ENCODE measurements at regions of chr11 and their contacts with region 1.

Region 1: GRCh38 chr11:10933455-10934292 is 75.8 kb upstream of the ZBED5 start:
- DNase-seq: peak; percentile 90 to 93
- ATAC-seq: peak; percentile 75 to 86
- H3K4me3 ChIP-seq: peak overlapping the region; percentile 45
- H3K27ac ChIP-seq: peak overlapping the region; percentile 98
- H3K4me1 ChIP-seq: peaks cover 40% of the 10 kb centered on the region
- CTCF ChIP-seq: peak; percentile 97
- EP300 ChIP-seq: no peak
- POLR2A ChIP-seq: peak; percentile 18; the same call in 1 of the 2 replicates
- RAD21 ChIP-seq: peak; percentile 97 to 99

Region 2: GRCh38 chr11:10857709-10858438 is 75.8 kb before region 1 on chr11 and contains the start of gene ZBED5:
- CTCF ChIA-PET with region 1: interaction called, 9 read pairs
- POLR2A ChIA-PET with region 1: interaction called, 27 read pairs
- DNase-seq: peak; percentile 87 to 98
- ATAC-seq: peak; percentile 96
- H3K4me3 ChIP-seq: peak within 1 kb of the TSS; percentile 91
- H3K27ac ChIP-seq: peak within 1 kb of the TSS; percentile 95 to 98
- H3K4me1 ChIP-seq: peaks cover 36% of the 10 kb centered on the region
- CTCF ChIP-seq: no peak
- EP300 ChIP-seq: no peak
- POLR2A ChIP-seq: peak; percentile 76
- RAD21 ChIP-seq: peak; percentile 12; a peak in 1 of 5 replicates
- polyA plus RNA-seq, gene ZBED5: 132 and 142 TPM in 2 replicates

Region 3: GRCh38 chr11:10943968-10944367 is 10.3 kb after region 1 on chr11:
- CTCF ChIA-PET with region 1: interaction called, 31 read pairs
- POLR2A ChIA-PET with region 1: interaction called, 7 read pairs
- DNase-seq: no peak
- ATAC-seq: peak; percentile 39 to 49; a peak in 2 of 6 replicates
- H3K4me3 ChIP-seq: no peak overlapping the region
- H3K27ac ChIP-seq: peak overlapping the region in 1 of 2 experiments; percentile 13; a peak in 1 of 6 replicates
- H3K4me1 ChIP-seq: peaks cover 9% of the 10 kb centered on the region; the same call in 2 of the 3 replicates
- CTCF ChIP-seq: no peak
- EP300 ChIP-seq: no peak
- POLR2A ChIP-seq: no peak
- RAD21 ChIP-seq: no peak

Region 4: GRCh38 chr11:11010624-11011127 is 77.0 kb after region 1 on chr11:
- CTCF ChIA-PET with region 1: interaction called, 24 read pairs
- POLR2A ChIA-PET with region 1: interaction called, 10 read pairs
- DNase-seq: peak; percentile 40 to 55
- ATAC-seq: peak; percentile 92 to 98
- H3K4me3 ChIP-seq: no peak overlapping the region
- H3K27ac ChIP-seq: peak overlapping the region in 1 of 2 experiments; percentile 47; a peak in 1 of 6 replicates
- H3K4me1 ChIP-seq: peaks cover 13% of the 10 kb centered on the region; the same call in 2 of the 3 replicates
- CTCF ChIP-seq: peak; percentile 36
- EP300 ChIP-seq: no peak
- POLR2A ChIP-seq: no peak
- RAD21 ChIP-seq: peak; percentile 49 to 58; a peak in 3 of 5 replicates

Region 5: DNA sequence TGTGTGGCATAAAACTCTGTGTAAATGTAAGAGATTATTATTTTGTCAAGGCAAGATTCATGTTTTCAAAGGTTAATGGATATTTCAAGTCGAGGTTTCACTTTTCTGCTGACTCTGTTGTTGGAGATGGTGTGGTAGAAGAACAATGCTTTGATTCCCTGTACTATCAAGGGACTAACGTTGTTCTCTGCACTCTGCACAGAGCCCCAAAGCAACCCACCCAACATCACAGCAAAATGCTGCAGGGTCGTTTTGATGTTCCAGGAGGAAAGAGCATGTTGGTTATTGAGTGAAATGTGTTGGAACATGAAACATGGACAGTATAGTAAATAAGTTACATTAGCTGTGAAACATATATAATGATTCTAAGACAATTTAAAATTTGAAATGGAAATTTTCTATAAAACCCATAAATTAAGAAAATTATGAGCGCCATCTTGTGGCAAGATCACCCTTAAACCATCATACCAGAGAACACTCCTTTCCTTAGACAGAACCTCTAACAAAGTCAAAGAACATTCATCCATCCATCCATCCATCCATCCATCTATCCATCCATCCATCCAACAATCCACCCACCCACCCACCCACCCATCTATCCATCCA is 88.6 kb after region 1 on chr11:
- CTCF ChIA-PET with region 1: interaction called, 116 read pairs
- POLR2A ChIA-PET with region 1: interaction called, 10 read pairs
- DNase-seq: peak; percentile 16 to 55
- ATAC-seq: peak; percentile 48 to 77; a peak in 3 of 6 replicates
- H3K4me3 ChIP-seq: no peak overlapping the region
- H3K27ac ChIP-seq: peak overlapping the region; percentile 18 to 20; a peak in 2 of 6 replicates
- H3K4me1 ChIP-seq: peaks cover 9% of the 10 kb centered on the region
- CTCF ChIP-seq: peak; percentile 76
- EP300 ChIP-seq: no peak
- POLR2A ChIP-seq: no peak
- RAD21 ChIP-seq: peak; percentile 78 to 86

Region 6: DNA sequence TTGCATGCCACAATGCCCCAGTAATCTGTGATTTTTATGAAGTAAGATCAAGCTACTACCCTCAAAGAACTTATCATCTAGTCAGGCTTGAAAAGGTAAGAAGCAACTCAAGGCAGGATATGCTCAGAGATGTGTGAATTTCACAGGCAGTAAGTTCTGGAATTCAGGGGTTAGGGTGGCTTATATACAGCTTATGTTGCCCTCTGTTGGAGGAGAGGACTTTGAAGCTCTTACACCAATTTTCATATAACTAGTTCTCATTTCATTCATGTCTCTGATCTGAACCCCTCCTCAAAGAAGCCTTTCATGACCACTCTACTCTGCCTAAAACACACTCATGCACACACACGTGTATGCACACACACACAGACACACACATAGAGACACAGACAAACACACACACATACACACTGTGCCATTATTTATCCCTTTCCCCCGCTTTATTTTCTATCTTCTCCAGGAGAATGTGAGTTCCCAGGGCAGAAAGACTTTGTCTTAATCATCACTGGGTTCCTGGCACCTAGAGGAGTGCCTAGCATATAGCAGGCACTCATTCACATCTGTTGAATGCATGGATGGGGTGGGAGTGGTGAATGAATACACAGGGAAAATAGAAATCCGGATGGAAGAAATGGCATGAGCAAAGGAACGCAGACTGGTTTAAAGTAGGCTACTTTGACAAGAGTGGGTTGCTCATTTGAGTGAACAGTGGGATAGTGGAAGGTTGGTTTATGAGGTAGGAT is 144.8 kb after region 1 on chr11:
- CTCF ChIA-PET with region 1: interaction called, 13 read pairs
- POLR2A ChIA-PET with region 1: no interaction called
- DNase-seq: peak in 1 of 2 experiments; percentile 40
- ATAC-seq: peak in 1 of 2 experiments; percentile 72; a peak in 3 of 6 replicates
- H3K4me3 ChIP-seq: no peak overlapping the region
- H3K27ac ChIP-seq: no peak overlapping the region
- H3K4me1 ChIP-seq: no peaks in the 10 kb centered on the region
- CTCF ChIP-seq: peak; percentile 21; the same call in 1 of the 3 replicates
- EP300 ChIP-seq: no peak
- POLR2A ChIP-seq: no peak
- RAD21 ChIP-seq: peak in 1 of 2 experiments; percentile 43; a peak in 3 of 5 replicates

Measured in A549 (cell line).